Activated CD4-positive, alpha-beta T cell treated with anti-CD3 and anti-CD28 coated beads, Interleukin-2, amount 10 ng/mL, durations not matched to agents 24 days and 14 days (primary cell): ENCODE measurements at regions of chr1 and their contacts with region 1.

Region 1: GRCh38 chr1:86380257-86380861 is 15.8 kb downstream of the ODF2L start:
- DNase-seq: peak; percentile 75
- H3K4me3 Mint-ChIP-seq: no peak overlapping the region
- H3K27ac Mint-ChIP-seq: no peak overlapping the region
- H3K4me1 Mint-ChIP-seq: peaks cover 3% of the 10 kb centered on the region
- H3K27me3 Mint-ChIP-seq: no peaks in the 10 kb centered on the region

Region 2: DNA sequence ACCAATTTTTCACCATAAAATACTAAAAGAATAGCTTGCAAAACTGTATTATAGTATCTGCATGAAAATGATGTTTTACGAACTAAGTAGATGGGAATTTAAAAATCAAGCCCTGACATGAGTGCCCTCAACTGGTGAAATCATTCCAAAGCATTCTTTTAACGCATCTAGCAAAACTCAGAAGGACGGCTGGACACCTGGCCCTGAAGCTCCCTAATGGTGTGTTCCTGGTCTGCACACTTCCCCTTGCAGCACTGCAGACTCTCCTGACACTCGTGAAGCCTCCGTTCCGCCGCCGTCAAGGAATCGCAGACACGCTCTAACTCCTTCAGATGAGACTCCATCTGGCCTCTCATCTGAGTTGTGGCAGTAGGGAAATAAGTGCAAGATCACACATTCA is 24.1 kb before region 1 on chr1:
- intact Hi-C with region 1: no loop called
- DNase-seq: no peak
- H3K4me3 Mint-ChIP-seq: no peak overlapping the region
- H3K27ac Mint-ChIP-seq: no peak overlapping the region
- H3K4me1 Mint-ChIP-seq: no peaks in the 10 kb centered on the region
- H3K27me3 Mint-ChIP-seq: no peaks in the 10 kb centered on the region

Region 3: DNA sequence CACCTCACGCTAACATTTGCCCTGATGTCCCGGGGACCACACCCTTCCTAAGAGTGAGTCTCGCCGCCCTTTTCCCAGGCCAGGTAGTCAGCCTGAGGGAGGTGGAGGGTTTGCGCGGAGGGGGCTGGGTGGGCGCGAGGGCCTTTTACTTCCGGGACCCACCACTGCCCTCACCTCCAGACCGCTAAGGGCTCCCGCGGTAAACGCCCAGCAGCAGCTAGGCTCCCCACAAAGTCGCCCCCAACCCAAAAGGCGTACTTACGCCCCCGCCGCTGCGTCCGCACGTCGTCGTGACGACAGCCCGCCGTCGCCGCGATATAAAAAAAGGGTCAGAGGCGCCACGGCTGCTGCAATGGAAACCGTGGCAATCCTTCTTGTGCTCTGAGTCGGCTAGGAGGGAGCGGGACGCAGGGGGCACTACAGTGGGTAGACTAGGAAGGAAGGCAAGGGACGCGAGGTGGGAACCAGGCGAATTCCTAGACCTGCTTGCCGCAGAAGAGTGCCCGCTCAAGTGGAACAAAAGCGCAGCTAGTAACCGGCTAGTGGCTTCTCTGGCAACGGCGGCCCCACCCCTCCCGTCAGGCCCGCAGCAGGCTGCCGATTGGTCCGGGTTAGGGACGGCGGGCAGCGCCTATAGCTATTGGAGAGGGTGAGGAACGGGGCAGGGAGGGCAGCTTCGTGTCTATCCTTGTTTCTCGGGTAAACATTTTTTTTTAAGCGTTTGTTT is 15.6 kb after region 1 on chr1 and contains the start of gene ODF2L:
- intact Hi-C with region 1: loop called (anchors 2 kb)
- DNase-seq: peak; percentile 97
- H3K4me3 Mint-ChIP-seq: peak within 1 kb of the TSS; percentile 94
- H3K27ac Mint-ChIP-seq: peak within 1 kb of the TSS; percentile 98
- H3K4me1 Mint-ChIP-seq: peaks cover 37% of the 10 kb centered on the region
- H3K27me3 Mint-ChIP-seq: peaks cover 13% of the 10 kb centered on the region
- total RNA-seq, gene ODF2L: 16.0 and 23.3 TPM in 2 replicates

Region 4: GRCh38 chr1:86409416-86410021 is 29.2 kb after region 1 on chr1:
- intact Hi-C with region 1: no loop called
- DNase-seq: no peak
- H3K4me3 Mint-ChIP-seq: no peak overlapping the region
- H3K27ac Mint-ChIP-seq: no peak overlapping the region
- H3K4me1 Mint-ChIP-seq: no peaks in the 10 kb centered on the region
- H3K27me3 Mint-ChIP-seq: peaks cover 10% of the 10 kb centered on the region

Region 5: DNA sequence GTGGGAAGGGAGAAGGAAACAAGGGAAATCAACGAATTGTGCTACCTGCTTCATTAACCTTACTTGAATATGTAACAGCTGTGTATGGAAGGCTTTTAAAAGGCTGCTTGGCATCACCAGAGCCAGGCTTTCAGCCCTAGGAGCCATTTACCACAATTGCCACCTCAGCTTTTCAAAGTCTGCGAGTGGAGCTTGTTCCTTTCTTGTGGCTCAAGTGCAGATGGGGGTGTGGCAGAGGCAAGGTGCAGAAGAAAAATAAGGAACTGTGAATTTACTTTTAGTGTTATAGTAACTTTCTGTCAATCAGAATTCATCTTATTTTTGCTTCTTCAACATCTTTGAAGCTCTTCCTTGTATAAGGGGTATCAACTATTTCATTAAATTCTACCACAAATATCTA is 61.2 kb after region 1 on chr1:
- intact Hi-C with region 1: no loop called
- DNase-seq: peak; percentile 64
- H3K4me3 Mint-ChIP-seq: no peak overlapping the region
- H3K27ac Mint-ChIP-seq: no peak overlapping the region
- H3K4me1 Mint-ChIP-seq: peaks cover 3% of the 10 kb centered on the region
- H3K27me3 Mint-ChIP-seq: peaks cover 9% of the 10 kb centered on the region

Region 6: DNA sequence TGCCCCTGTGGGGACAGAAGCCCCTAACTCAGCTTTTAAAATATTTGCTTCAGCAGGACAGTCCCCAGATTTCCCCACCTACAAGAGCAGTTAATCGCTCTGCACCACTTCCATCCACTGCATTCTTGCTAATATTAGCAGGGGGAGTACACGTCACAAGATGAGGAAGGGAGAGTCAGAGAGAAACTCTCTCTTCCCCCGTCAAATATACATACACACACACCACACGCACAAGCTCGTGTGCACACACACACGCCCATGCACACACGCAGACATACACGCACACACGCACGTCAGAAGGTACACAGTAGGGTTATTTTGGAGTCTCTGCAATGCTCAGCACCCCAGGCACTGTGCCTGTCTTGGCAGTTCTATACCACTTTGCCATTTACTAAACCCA is 90.5 kb after region 1 on chr1:
- intact Hi-C with region 1: loop called (anchors 1 kb)
- DNase-seq: no peak
- H3K4me3 Mint-ChIP-seq: no peak overlapping the region
- H3K27ac Mint-ChIP-seq: no peak overlapping the region
- H3K4me1 Mint-ChIP-seq: no peaks in the 10 kb centered on the region
- H3K27me3 Mint-ChIP-seq: peaks cover 19% of the 10 kb centered on the region

Region 7: DNA sequence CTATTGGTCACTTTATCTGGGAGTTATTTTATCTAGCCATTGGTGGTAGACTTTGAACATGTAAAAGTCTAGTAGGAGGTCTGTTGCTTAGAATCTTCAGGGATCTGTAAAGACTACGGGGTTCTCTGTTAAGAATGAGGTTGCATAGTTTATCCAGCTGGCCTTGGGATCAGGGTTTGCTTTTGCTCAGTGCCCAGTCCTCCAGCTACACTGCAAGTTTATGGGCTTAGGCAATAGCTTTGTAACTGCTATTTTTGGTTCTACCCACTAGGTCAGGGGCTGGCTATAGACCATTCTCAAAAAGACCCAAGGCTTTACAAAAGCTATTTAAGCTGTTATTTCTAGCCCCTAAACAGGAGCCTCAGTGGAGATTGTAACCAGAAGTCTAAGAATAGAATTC is 333.8 kb after region 1 on chr1:
- intact Hi-C with region 1: loop called (anchors 5 kb)
- DNase-seq: no peak
- H3K4me3 Mint-ChIP-seq: no peak overlapping the region
- H3K27ac Mint-ChIP-seq: no peak overlapping the region
- H3K4me1 Mint-ChIP-seq: peaks cover 13% of the 10 kb centered on the region
- H3K27me3 Mint-ChIP-seq: no peaks in the 10 kb centered on the region

Region 8: GRCh38 chr1:86913896-86914634 is 533.7 kb after region 1 on chr1 and contains the start of gene SELENOF:
- intact Hi-C with region 1: loop called (anchors 5 kb)
- DNase-seq: peak; percentile 100
- H3K4me3 Mint-ChIP-seq: no peak within 1 kb of the TSS
- H3K27ac Mint-ChIP-seq: no peak within 1 kb of the TSS
- H3K4me1 Mint-ChIP-seq: peaks cover 33% of the 10 kb centered on the region
- H3K27me3 Mint-ChIP-seq: no peaks in the 10 kb centered on the region
- total RNA-seq, gene SELENOF: 179 and 184 TPM in 2 replicates